ENCODE measurements at regions of chr15 and their contacts with region 1.

Region 1: GRCh38 chr15:64067564-64068030 is 21.3 kb upstream of the DAPK2 start:
- DNase-seq: peak; percentile 19 to 55
- ATAC-seq: peak; percentile 63 to 86 (median 78)
- H3K4me3 ChIP-seq: no peak overlapping the region
- H3K27ac ChIP-seq: no peak overlapping the region
- H3K4me1 ChIP-seq: peaks cover 0 to 47% (median 27%) of the 10 kb centered on the region in 9 donors
- H3K27me3 ChIP-seq: no peaks in the 10 kb centered on the region
- CTCF ChIP-seq: peak; percentile 74 to 90 (median 85)

Region 2: DNA sequence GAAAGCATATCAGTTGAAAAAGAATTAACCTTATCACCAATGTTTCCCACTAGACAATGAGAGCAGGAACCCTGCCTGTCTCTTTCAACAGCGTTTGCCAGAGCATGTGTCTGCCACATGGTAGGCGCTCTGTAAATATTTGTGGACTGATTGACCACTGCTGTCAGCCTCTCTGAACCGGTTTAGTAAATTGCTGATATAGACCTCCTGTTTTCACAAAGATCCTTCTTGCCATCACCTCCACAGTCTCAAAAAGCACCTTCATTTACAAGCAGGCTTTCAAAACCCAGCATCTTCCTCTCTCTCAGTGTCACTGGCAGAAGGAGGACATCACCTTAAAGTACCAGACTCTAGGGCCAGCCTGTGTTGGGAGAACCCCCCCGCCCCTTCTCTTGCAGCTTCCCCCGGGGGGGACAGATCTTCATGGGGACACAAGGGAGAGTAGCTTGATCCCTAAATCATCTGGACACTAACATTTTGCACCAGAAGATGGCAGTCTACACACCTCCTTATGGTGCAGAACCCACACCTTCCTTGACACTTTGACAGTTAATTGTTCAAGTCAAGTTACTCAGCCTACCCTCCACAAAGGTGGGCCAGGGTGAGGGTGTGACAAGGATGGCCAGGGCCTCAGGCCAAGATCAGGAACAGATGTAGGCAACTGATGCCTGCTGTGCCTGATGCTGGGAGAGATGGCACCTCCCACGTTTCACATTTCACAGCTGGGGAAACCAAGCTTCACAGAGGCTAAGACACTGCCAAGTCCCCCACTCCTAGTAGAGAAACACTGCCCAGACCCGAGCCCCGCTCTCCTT is 601.0 kb before region 1 on chr15:
- intact Hi-C with region 1: loop called in 2 of 10 experiments (anchors 5 to 10 kb)
- DNase-seq: peak in 1 of 2 donors; percentile 40
- ATAC-seq: peak; percentile 55 to 86 (median 76)
- H3K4me3 ChIP-seq: no peak overlapping the region
- H3K27ac ChIP-seq: no peak overlapping the region
- H3K4me1 ChIP-seq: peaks cover 0 to 14% (median 0%) of the 10 kb centered on the region in 9 donors
- H3K27me3 ChIP-seq: peaks cover 0 to 4% (median 0%) of the 10 kb centered on the region in 7 donors
- CTCF ChIP-seq: peak; percentile 23 to 71 (median 60)

Region 3: DNA sequence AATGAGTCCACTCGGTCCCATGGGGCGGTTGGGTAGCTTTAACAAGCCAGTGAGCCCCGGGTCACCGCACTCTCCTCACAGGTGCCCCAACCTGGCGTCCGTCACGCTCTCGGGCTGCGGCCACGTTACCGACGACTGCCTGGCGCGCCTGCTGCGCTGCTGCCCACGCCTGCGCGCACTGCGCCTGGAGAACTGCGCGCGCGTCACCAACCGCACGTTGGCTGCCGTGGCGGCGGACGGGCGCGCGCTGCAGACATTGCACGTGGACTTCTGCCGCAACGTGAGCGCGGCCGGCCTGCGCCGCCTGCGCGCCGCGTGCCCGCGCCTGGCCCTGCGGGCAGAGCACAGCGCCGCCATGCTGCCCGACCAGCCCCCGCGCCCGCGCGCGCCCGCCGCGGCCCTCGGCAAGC is 467.0 kb before region 1 on chr15:
- intact Hi-C with region 1: loop called in 1 of 10 experiments (anchors 10 kb)
- DNase-seq: peak; percentile 85 to 91
- ATAC-seq: peak; percentile 64 to 91 (median 73)
- H3K4me3 ChIP-seq: peak overlapping the region; percentile 11 to 74 (median 68)
- H3K27ac ChIP-seq: peak overlapping the region; percentile 36 to 95 (median 89)
- H3K4me1 ChIP-seq: peaks cover 12 to 84% (median 59%) of the 10 kb centered on the region in 9 donors
- H3K27me3 ChIP-seq: no peaks in the 10 kb centered on the region
- CTCF ChIP-seq: peak in 4 of 9 donors; percentile 14 to 47 (median 34)

Region 4: GRCh38 chr15:63610200-63610841 is 457.3 kb before region 1 on chr15:
- intact Hi-C with region 1: loop called in 3 of 10 experiments (anchors 5 to 10 kb)
- DNase-seq: peak in 1 of 2 donors; percentile 65
- ATAC-seq: peak; percentile 51 to 82 (median 73)
- H3K4me3 ChIP-seq: no peak overlapping the region
- H3K27ac ChIP-seq: peak overlapping the region in 7 of 10 donors; percentile 8 to 53 (median 41)
- H3K4me1 ChIP-seq: peaks cover 0 to 27% (median 13%) of the 10 kb centered on the region in 9 donors
- H3K27me3 ChIP-seq: no peaks in the 10 kb centered on the region
- CTCF ChIP-seq: peak in 8 of 9 donors; percentile 36 to 72 (median 65)

Region 5: GRCh38 chr15:63752075-63752684 is 315.4 kb before region 1 on chr15:
- intact Hi-C with region 1: loop called (anchors 1 to 5 kb)
- DNase-seq: peak in 1 of 2 donors; percentile 60
- ATAC-seq: peak; percentile 52 to 86 (median 81)
- H3K4me3 ChIP-seq: no peak overlapping the region
- H3K27ac ChIP-seq: no peak overlapping the region
- H3K4me1 ChIP-seq: peaks cover 0 to 9% (median 0%) of the 10 kb centered on the region in 9 donors
- H3K27me3 ChIP-seq: no peaks in the 10 kb centered on the region
- CTCF ChIP-seq: peak; percentile 51 to 85 (median 73)

Region 6: DNA sequence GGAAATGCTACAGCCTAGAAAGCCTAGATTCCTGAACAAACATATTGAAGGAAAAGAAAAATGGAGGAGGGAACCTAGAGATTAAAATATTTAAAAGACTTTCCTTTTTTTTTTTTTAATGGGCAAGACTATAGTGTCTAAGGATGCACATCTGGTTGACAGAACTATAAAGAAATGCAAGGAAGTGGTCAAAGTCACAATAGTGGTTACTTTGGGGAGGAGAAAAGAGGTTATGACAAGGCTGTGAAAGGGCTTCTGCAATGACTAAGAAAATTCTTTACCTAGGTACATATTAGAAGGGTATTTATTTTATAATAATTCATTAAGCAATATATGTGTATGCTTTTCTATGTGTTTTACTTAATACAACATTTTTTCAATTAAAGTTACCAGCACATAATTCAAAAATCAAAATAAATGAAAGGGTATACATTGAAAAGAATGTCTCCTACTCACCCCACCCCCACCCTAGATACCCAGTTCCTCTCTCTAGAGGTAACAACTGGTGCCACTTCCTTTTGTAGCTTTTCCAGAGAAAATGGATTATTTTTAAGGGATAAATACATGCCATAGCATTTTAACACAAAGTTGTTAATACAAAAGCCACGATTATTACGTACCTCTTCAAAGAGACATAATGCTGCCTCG is 304.0 kb before region 1 on chr15:
- intact Hi-C with region 1: loop called in 1 of 10 experiments (anchors 5 kb)
- DNase-seq: no peak
- ATAC-seq: no peak
- H3K4me3 ChIP-seq: no peak overlapping the region
- H3K27ac ChIP-seq: no peak overlapping the region
- H3K4me1 ChIP-seq: peaks cover 0 to 87% (median 46%) of the 10 kb centered on the region in 9 donors
- H3K27me3 ChIP-seq: no peaks in the 10 kb centered on the region
- CTCF ChIP-seq: no peak

Region 7: DNA sequence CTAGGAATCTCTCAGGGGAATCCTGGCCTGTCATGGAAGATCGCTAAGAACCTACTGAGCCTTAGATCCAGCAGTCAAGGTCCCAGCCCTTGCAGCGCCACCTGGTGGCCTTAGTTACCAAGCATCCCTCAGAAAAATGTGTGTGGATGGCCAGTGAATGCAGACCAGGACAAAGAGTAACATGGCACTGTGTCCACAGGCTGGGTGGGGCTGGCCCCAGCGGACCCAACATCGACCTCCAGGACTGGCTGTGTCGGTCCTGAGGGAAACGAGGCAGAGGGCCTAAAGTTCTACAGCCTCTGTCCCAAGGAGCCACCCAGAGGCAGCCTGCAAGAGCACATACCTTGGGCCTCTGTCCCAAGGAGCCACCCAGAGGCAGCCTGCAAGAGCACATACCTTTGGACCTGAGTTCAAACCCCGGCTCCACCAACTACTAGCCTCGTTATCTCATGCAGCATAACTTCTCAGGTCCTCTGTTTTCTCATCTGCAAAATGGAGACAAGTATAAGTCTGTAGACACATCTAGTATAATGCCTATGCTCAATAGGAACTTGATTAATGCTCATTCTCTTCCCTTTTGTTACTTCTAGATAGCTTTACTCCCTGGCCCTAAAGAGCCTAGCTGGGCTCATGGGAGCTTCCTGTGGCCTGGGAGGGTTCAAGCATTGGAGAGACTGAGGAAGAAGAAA is 176.4 kb before region 1 on chr15:
- intact Hi-C with region 1: loop called in 1 of 10 experiments (anchors 2 kb)
- DNase-seq: peak; percentile 81
- ATAC-seq: peak; percentile 70 to 91 (median 77)
- H3K4me3 ChIP-seq: no peak overlapping the region
- H3K27ac ChIP-seq: peak overlapping the region in 1 of 10 donors; percentile 36
- H3K4me1 ChIP-seq: peaks cover 0 to 76% (median 21%) of the 10 kb centered on the region in 9 donors
- H3K27me3 ChIP-seq: no peaks in the 10 kb centered on the region
- CTCF ChIP-seq: peak; percentile 80 to 92 (median 90)

Region 8: GRCh38 chr15:64162870-64163658 is 95.5 kb after region 1 on chr15 and contains the start of gene PPIB:
- intact Hi-C with region 1: no loop called
- DNase-seq: peak; percentile 97 to 99
- ATAC-seq: peak; percentile 95 to 98 (median 97)
- H3K4me3 ChIP-seq: peak within 1 kb of the TSS; percentile 51 to 95 (median 92)
- H3K27ac ChIP-seq: peak within 1 kb of the TSS; percentile 78 to 95 (median 90)
- H3K4me1 ChIP-seq: peaks cover 27 to 56% (median 51%) of the 10 kb centered on the region in 9 donors
- H3K27me3 ChIP-seq: no peaks in the 10 kb centered on the region
- CTCF ChIP-seq: peak in 8 of 9 donors; percentile 39 to 68 (median 48)
- total RNA-seq, gene PPIB: 60.3 to 178 (median 83.7) TPM

Measured in heart right ventricle (tissue), 16 donors.